ENCODE measurements at regions of chr3 and their contacts with region 1.

Region 1: DNA sequence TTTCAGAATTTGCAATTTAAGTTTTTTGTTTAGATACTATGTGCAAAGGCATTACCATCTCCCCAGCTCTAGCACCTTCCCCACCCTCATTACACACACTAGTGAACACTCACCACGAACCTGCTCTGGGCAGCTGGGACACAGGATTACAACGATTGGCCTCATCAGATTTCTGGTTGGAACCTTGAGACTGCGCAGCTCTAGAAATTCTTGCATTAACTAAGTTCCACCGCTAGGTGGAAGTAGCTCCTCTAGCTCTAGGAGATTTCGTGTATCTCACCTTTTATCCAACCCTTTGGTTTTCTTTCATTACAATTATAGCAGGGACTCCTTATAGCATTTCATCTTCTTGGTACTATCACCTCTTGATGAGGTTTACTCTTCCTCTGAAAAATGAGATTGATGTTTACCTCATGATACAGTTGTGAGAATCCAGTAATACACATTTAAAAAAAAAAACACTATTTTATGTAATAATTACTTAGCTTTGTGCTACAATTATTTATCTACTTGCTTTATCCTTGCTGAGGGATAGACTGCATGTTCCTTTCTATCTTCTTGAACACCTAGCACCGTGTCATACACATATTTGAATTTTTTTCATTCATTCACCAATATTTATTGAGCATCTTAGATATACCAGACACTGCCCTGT is 28.7 kb upstream of the PLOD2 start:
- DNase-seq: peak; percentile 42 to 72
- ATAC-seq: peak; percentile 81 to 94
- H3K4me3 ChIP-seq: peak overlapping the region; percentile 24; the same call in 1 of the 3 replicates
- H3K27ac ChIP-seq: peak overlapping the region; percentile 56 to 65; a peak in 4 of 6 replicates
- H3K4me1 ChIP-seq: peaks cover 33% of the 10 kb centered on the region
- CTCF ChIP-seq: peak; percentile 86
- EP300 ChIP-seq: no peak
- POLR2A ChIP-seq: no peak
- RAD21 ChIP-seq: peak; percentile 81 to 86

Region 2: GRCh38 chr3:146026547-146026946 is 163.1 kb before region 1 on chr3:
- CTCF ChIA-PET with region 1: no interaction called
- POLR2A ChIA-PET with region 1: no interaction called
- DNase-seq: no peak
- ATAC-seq: no peak
- H3K4me3 ChIP-seq: no peak overlapping the region
- H3K27ac ChIP-seq: no peak overlapping the region
- H3K4me1 ChIP-seq: peaks cover 3% of the 10 kb centered on the region; the same call in 1 of the 3 replicates
- CTCF ChIP-seq: no peak
- EP300 ChIP-seq: no peak
- POLR2A ChIP-seq: no peak
- RAD21 ChIP-seq: no peak; a peak in 1 of 5 replicates

Region 3: DNA sequence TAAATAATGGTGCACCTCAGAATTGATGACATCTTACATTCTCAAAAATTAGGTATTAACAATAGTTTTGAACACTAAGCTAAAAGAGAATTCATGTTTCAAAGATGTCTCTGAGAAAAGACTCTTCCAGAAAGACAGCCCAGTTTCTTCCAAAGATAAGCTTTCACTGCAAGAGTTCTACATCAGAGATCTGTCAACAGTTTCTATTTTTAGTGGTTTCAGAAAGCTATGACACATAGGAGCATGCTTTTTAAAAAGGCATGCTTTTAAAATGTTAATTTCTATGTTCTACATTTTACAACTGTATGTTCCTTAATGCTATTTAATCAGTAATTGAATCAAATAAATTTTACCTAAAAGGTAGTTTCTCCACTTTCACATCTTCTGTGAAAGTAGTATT is 116.8 kb before region 1 on chr3:
- CTCF ChIA-PET with region 1: interaction called, 18 read pairs
- POLR2A ChIA-PET with region 1: no interaction called
- DNase-seq: no peak
- ATAC-seq: no peak
- H3K4me3 ChIP-seq: no peak overlapping the region
- H3K27ac ChIP-seq: no peak overlapping the region
- H3K4me1 ChIP-seq: peaks cover 53% of the 10 kb centered on the region
- CTCF ChIP-seq: no peak
- EP300 ChIP-seq: no peak
- POLR2A ChIP-seq: no peak
- RAD21 ChIP-seq: no peak

Region 4: DNA sequence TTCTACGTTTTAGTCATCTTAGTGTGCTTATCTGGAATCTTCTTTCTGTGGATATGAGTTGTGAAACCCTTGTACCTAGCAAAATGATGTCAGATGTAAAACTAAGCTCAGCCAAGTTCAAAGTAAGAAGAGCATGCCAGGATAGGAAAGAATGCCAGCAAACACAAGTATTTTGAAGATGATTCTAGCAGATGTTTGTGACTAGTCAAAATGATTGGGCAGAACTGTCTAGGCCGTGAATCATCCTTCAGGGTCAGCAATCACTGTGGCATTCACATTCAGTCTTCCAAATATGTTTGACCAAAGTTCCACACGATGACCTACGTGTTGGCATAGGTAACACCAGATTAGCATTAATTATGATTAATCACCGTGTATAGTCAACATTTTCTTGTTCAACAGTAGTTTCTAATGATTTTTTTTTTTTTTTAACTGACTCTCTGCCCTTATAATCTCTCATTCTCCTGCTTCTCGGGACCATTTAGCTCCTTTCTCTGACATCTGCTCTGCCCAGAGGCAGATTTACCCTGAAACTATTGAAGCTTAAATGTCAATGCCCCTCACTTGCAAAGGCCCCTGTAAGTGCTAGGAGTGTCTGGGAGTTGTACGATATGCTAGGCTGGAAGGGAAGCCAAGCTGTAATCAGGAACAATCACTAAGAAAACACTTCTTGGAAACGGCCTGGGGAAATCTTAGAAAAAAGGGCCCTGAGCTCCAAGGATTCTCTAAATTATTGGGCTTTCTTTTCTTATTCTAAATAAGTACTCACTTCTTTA is 23.0 kb before region 1 on chr3:
- CTCF ChIA-PET with region 1: interaction called, 28 read pairs
- POLR2A ChIA-PET with region 1: interaction called, 18 read pairs
- DNase-seq: peak in 1 of 2 experiments; percentile 88
- ATAC-seq: peak; percentile 65
- H3K4me3 ChIP-seq: 0 out of 3 replicates have a peak overlapping the region, but pooled peaks have one; percentile 10
- H3K27ac ChIP-seq: peak overlapping the region; percentile 87 to 97
- H3K4me1 ChIP-seq: peaks cover 61% of the 10 kb centered on the region
- CTCF ChIP-seq: no peak
- EP300 ChIP-seq: peak; percentile 81 to 92; a peak in 3 of 5 replicates
- POLR2A ChIP-seq: no peak
- RAD21 ChIP-seq: peak; percentile 2 to 21; a peak in 1 of 5 replicates

Region 5: DNA sequence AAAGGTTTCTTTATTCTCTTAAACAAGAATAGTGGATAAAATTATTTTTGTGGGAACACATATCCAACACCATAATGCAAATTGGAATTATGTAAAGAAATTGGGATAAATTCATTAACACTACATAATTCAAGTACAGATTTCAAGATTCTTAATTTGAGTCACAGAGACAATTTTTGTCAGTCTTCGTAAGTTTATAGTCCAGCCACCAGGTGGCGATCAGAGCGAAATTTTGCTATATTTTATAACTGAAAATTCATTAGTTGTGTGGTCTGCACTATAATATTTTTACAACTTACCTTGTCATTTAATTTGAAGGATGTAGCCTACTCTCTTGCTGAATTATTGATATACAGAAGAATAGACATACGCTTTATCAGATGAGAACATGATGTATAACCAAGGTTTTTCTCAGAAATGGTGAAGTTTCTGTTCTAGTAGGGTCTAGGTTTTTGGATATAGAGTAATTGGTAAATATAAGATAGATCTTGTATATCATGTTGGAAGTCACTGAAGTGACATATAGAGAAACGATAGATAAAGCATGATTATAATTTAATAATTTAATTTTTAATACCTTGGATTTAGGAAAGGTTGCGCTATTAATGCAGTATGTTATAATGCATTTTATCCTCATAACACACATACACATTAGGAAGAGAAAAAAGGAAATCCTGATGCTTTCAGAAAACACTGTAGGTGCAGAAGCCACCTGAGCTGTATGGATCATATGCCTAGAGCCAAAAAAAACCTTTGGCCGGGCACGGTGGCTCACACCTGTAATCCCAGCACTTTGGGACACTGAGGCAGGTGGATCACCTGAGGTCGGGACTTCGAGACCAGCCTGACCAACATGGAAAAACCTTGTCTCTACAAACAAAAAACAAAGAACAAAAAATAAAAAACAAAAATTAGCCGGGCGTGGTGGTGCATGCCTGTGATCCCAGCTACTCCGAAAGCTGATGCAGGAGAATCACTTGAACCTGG is 29.5 kb after region 1 on chr3:
- CTCF ChIA-PET with region 1: interaction called, 21 read pairs
- POLR2A ChIA-PET with region 1: no interaction called
- DNase-seq: peak; percentile 15 to 40
- ATAC-seq: no peak
- H3K4me3 ChIP-seq: no peak overlapping the region
- H3K27ac ChIP-seq: peak overlapping the region in 1 of 2 experiments; percentile 32; a peak in 2 of 6 replicates
- H3K4me1 ChIP-seq: peaks cover 43% of the 10 kb centered on the region
- CTCF ChIP-seq: peak; percentile 93
- EP300 ChIP-seq: no peak
- POLR2A ChIP-seq: no peak
- RAD21 ChIP-seq: peak; percentile 81 to 86

Region 6: GRCh38 chr3:146513386-146514051 is 323.9 kb after region 1 on chr3:
- CTCF ChIA-PET with region 1: no interaction called
- POLR2A ChIA-PET with region 1: no interaction called
- DNase-seq: no peak
- ATAC-seq: no peak; a peak in 1 of 6 replicates
- H3K4me3 ChIP-seq: no peak overlapping the region
- H3K27ac ChIP-seq: no peak overlapping the region
- H3K4me1 ChIP-seq: peaks cover 24% of the 10 kb centered on the region; the same call in 1 of the 3 replicates
- CTCF ChIP-seq: no peak
- EP300 ChIP-seq: no peak
- POLR2A ChIP-seq: no peak
- RAD21 ChIP-seq: no peak

Region 7: GRCh38 chr3:146577662-146578061 is 388.0 kb after region 1 on chr3:
- CTCF ChIA-PET with region 1: interaction called, 30 read pairs
- POLR2A ChIA-PET with region 1: no interaction called
- DNase-seq: peak in 1 of 2 experiments; percentile 70
- ATAC-seq: peak; percentile 56 to 82; a peak in 4 of 6 replicates
- H3K4me3 ChIP-seq: no peak overlapping the region
- H3K27ac ChIP-seq: no peak overlapping the region
- H3K4me1 ChIP-seq: no peaks in the 10 kb centered on the region
- CTCF ChIP-seq: peak; percentile 82
- EP300 ChIP-seq: no peak
- POLR2A ChIP-seq: no peak
- RAD21 ChIP-seq: peak; percentile 90 to 93